ENCODE measurements at regions of chr17 and their contacts with region 1.

Region 1: DNA sequence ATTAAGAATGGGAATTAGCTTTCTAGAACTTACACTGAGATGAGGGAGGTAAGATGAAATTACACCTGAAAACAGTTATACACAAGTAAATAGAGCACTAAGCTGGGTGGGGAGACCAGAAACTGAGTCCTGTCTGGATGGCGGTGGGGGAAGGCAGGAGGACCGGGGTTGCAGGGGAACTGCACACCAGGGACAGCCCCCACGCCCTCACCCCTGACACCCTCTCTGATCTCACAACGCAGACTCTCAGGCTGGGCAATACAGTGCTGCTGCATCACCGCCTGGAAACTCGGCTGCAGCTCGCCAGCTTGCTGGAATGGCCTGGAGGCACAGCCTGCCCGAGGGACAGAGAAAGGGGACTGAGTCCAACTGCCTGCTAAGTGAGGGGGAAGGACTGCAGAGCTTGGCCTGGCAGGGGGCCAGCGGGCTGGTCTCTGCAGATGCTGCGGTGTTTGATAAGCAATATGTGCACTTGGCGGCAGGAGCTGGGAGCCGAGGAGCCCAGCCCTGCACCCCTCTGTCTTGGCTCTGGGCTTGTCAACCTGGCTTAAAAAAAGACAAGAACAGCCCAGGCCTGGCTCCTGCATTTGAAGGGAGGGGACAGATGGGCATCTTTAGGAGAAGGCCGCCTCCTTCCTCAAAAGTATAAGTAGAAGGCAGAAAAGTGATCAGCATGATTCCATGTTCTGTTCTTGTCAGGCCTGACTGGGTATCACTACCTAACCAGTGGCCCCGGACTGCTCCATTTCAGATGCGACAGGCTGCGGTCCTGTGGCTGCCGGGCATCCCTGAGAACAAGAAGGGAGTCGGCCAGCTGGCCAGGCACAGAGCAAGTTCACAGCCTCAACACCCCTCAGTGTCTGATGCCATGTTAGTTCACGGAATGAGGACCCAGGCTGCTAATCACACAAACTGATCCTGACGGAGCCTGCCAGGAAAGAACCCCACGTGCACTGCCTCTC is 30.2 kb downstream of the SPHK1 start:
- DNase-seq: peak; percentile 80 to 88
- ATAC-seq: peak; percentile 78 to 92 (median 88)
- H3K4me3 ChIP-seq: no peak overlapping the region
- H3K27ac ChIP-seq: peak overlapping the region in 6 of 10 donors; percentile 24 to 68 (median 54)
- H3K4me1 ChIP-seq: peaks cover 8 to 88% (median 50%) of the 10 kb centered on the region in 9 donors
- H3K27me3 ChIP-seq: no peaks in the 10 kb centered on the region
- CTCF ChIP-seq: no peak

Region 2: DNA sequence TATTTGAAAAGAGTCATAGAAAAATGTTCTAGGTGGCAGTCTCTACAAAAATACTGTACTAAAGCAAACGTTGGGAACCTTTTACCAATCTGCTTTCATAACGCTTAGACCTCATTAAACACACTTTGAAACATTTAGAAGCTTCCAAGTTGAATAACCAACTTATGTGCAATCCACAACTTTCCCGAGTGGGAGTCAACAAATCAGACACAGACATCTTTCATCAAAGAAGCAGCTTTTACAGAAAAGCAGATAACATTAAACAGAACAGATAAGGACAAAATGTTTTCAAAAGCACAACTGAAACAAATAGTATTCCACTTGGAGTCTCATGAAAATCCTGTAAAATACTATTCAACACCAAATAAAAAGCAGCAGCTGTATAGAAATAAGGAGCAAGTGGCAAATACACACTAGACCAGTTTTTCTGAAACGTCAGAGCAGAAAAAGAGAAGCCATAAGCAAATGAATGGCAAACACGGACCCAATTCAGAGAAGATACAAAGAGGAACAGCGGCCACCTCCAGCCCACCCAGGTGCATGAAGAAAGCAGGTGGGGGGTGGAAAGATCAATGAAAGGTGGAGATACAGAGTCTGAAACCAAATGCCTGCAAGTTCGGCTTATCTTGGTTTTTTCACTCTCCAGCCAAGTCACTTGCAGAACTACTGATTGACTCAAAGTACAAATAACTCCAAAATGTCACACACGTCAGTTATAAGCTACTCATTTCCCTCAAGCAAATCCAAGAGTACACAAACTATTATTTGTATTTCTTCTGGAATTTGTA is 455.4 kb before region 1 on chr17:
- intact Hi-C with region 1: no loop called
- DNase-seq: no peak
- ATAC-seq: peak in 2 of 8 donors; percentile 47 to 53
- H3K4me3 ChIP-seq: no peak overlapping the region
- H3K27ac ChIP-seq: peak overlapping the region in 1 of 10 donors; percentile 9
- H3K4me1 ChIP-seq: peaks cover 0 to 29% (median 22%) of the 10 kb centered on the region in 9 donors
- H3K27me3 ChIP-seq: no peaks in the 10 kb centered on the region
- CTCF ChIP-seq: no peak

Region 3: DNA sequence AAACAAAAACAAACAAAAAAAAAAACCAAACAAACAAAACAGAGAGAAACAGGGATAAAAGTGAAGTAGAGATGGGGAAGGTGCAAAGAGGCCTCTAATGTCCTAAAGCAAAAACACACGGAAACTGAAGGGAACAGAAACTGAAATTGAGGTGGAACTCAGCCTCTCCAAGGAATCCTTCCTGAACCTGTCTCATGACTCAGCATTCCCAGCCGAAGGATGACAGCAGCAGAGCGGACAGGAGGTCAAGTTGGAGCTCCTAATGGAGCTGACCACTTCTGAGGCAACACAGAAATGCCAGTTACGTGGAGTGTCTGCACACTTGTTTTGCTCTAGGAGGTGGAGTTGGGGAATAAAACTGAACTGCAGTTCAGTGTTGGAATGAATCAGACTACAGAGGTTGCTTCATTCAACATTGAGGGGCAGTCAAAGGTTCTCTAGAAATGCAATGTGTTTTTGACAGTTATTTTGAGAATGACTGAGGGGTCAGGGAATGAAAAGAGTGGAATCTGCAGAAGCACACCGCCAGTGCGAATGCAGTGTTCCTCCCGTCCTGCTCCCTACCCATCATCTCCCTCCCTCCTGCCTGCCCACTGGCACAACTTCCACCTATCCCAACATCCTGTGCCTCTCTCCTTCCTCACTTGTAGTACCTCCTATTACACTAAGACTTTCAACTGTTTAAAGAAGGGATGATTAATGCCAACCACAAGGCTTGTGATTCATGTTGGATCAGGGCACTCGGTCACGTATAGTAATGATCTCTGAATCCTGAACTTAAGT is 32.0 kb after region 1 on chr17:
- intact Hi-C with region 1: loop called in 5 of 10 experiments (anchors 5 kb)
- DNase-seq: no peak
- ATAC-seq: peak in 5 of 8 donors; percentile 7 to 41 (median 34)
- H3K4me3 ChIP-seq: no peak overlapping the region
- H3K27ac ChIP-seq: peak overlapping the region in 9 of 10 donors; percentile 28 to 94 (median 76)
- H3K4me1 ChIP-seq: peaks cover 0 to 95% (median 71%) of the 10 kb centered on the region in 9 donors
- H3K27me3 ChIP-seq: no peaks in the 10 kb centered on the region
- CTCF ChIP-seq: no peak

Region 4: GRCh38 chr17:76452660-76453430 is 38.2 kb after region 1 on chr17 and contains the start of gene UBE2O:
- intact Hi-C with region 1: loop called (anchors 2 to 5 kb)
- DNase-seq: peak; percentile 87 to 91
- ATAC-seq: peak; percentile 91 to 97 (median 92)
- H3K4me3 ChIP-seq: peak within 1 kb of the TSS; percentile 70 to 99 (median 93)
- H3K27ac ChIP-seq: peak within 1 kb of the TSS; percentile 60 to 95 (median 88)
- H3K4me1 ChIP-seq: peaks cover 4 to 45% (median 30%) of the 10 kb centered on the region in 9 donors
- H3K27me3 ChIP-seq: no peaks in the 10 kb centered on the region
- CTCF ChIP-seq: peak in 8 of 9 donors; percentile 6 to 64 (median 50)
- total RNA-seq, gene UBE2O: 31.0 to 39.0 (median 36.9) TPM

Region 5: GRCh38 chr17:76458580-76459490 is 44.2 kb after region 1 on chr17:
- intact Hi-C with region 1: loop called in 8 of 10 experiments (anchors 2 to 5 kb)
- DNase-seq: peak; percentile 48 to 57
- ATAC-seq: peak; percentile 43 to 86 (median 79)
- H3K4me3 ChIP-seq: no peak overlapping the region
- H3K27ac ChIP-seq: no peak overlapping the region
- H3K4me1 ChIP-seq: no peaks in the 10 kb centered on the region
- H3K27me3 ChIP-seq: no peaks in the 10 kb centered on the region
- CTCF ChIP-seq: peak in 8 of 9 donors; percentile 13 to 62 (median 53)

Region 6: GRCh38 chr17:76501018-76501826 is 86.6 kb after region 1 on chr17 and contains the start of gene RHBDF2:
- intact Hi-C with region 1: loop called in 7 of 10 experiments (anchors 5 to 10 kb)
- DNase-seq: peak; percentile 85 to 94
- ATAC-seq: peak; percentile 80 to 91 (median 88)
- H3K4me3 ChIP-seq: peak within 1 kb of the TSS; percentile 35 to 85 (median 78)
- H3K27ac ChIP-seq: peak within 1 kb of the TSS; percentile 83 to 97 (median 92)
- H3K4me1 ChIP-seq: peaks cover 20 to 64% (median 48%) of the 10 kb centered on the region in 9 donors
- H3K27me3 ChIP-seq: no peaks in the 10 kb centered on the region
- CTCF ChIP-seq: no peak
- total RNA-seq, gene RHBDF2: 6.5 to 33.1 (median 7.7) TPM

Measured in heart right ventricle (tissue), 16 donors.